Gastrocnemius medialis (tissue), 4 donors: ENCODE measurements at regions of chr7 and their contacts with region 1.

Region 1: GRCh38 chr7:105112440-105113418 is 98.7 kb downstream of the KMT2E start:
- DNase-seq: no peak
- ATAC-seq: no peak
- H3K4me3 ChIP-seq: no peak overlapping the region
- H3K27ac ChIP-seq: peak overlapping the region in 3 of 4 donors; percentile 0 to 38 (median 18)
- H3K4me1 ChIP-seq: no peaks in the 10 kb centered on the region
- H3K27me3 ChIP-seq: no peaks in the 10 kb centered on the region
- CTCF ChIP-seq: no peak
- POLR2A ChIP-seq: no peak

Region 2: DNA sequence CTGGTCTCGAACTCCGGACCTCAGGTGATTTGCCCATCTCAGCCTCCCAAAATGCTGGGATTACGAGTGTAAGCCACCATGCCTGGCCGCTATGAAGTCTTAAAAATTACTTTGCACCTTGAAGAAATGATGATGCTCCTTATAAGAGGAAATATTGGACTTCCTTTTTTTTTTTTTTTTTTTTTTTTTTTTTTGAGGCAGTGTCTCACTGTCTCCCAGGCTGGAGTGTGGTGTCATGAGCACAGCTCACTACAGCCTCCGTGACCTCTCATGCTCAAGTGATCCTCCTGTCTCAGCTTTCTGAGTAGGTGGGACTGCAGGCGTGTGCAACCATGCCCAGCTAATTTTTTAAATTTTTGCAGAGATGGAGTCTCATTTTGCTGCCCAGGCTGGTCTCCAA is 33.4 kb before region 1 on chr7:
- in situ Hi-C with region 1: no loop called
- intact Hi-C with region 1: loop called (anchors 1 kb)
- DNase-seq: no peak
- ATAC-seq: no peak
- H3K4me3 ChIP-seq: no peak overlapping the region
- H3K27ac ChIP-seq: no peak overlapping the region
- H3K4me1 ChIP-seq: no peaks in the 10 kb centered on the region
- H3K27me3 ChIP-seq: no peaks in the 10 kb centered on the region
- CTCF ChIP-seq: no peak
- POLR2A ChIP-seq: no peak

Region 3: DNA sequence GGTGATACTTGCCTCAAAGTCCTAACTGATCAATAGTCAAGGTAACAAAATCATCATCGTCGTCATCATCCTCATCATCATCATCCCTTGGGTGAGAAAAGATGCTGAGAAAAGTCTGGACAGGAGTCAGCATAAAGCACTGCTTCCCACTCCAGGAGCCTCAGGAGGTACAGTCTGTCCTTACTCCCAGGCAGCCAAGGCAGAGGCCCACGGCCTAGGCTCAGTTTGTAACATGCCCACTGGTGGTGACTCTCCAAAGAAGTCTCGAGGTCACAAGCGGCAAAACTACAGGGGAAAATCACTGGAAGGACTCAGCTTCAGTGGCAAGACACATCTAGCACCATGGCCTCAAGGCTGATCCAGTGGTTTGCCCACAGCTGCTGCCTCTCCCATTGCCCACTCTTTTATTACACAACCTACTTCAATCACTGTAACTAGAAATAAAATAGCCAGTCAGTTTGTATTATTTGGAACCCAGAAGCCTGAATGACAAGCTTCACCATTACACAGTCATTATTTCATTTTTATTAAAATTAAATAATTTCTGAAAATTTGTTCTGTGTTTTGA is 125.6 kb after region 1 on chr7:
- in situ Hi-C with region 1: no loop called
- intact Hi-C with region 1: no loop called
- DNase-seq: no peak
- ATAC-seq: peak; percentile 36 to 49
- H3K4me3 ChIP-seq: no peak overlapping the region
- H3K27ac ChIP-seq: peak overlapping the region in 1 of 4 donors; percentile 28
- H3K4me1 ChIP-seq: peaks cover 38 to 48% of the 10 kb centered on the region in 2 donors
- H3K27me3 ChIP-seq: no peaks in the 10 kb centered on the region
- CTCF ChIP-seq: no peak
- POLR2A ChIP-seq: no peak

Region 4: GRCh38 chr7:105713488-105714465 is 601.0 kb after region 1 on chr7:
- in situ Hi-C with region 1: no loop called
- intact Hi-C with region 1: no loop called
- DNase-seq: no peak
- ATAC-seq: no peak
- H3K4me3 ChIP-seq: no peak overlapping the region
- H3K27ac ChIP-seq: no peak overlapping the region
- H3K4me1 ChIP-seq: peaks cover 0 to 8% of the 10 kb centered on the region in 2 donors
- H3K27me3 ChIP-seq: no peaks in the 10 kb centered on the region
- CTCF ChIP-seq: no peak
- POLR2A ChIP-seq: no peak